ENCODE measurements at regions of chr19 and their contacts with region 1.

Region 1: DNA sequence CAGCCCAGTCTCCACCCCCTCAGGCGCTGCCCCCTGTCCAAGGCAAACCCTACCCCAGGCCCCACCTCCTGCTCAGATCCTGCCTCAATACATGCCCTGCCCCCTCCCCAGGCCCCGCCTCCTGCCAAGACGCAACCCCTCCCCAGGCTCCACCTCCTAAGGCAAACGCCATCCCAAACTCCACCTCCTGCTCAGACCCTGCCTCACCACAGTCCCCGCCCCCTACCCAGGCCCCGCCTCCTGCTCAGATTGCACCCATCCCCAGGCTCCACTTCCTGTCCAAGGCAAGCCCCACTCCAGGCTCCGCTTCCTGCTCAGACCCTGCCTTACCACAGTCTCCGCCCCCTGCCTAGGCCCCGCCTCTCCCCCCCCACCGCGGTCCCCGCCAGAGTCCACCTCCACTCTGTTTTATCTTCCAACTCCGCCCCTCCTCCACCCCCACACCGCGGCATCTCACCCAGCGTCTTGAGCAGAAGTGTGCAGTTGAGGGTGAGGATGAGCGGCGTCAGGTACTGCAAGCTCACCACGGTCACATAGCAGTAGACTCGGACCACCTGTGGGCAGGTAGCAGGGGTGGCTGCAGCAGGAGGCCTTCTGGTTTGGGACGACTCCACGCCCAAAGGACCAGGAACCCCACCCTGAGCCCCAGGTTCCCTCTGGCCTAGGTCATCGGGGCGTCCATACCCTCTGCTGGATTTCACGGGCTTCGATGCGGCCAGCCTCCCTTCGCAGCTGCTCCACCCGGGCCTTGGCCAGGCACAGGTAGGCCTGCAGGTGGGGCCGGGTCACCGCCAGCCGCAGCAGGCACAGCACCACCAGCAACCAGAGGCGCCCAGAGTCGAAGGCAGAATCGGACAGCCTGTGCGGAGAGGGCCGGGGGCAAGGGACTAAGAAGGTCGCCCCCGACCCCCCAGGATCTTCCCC is 17.7 kb downstream of the TMEM161A start:
- DNase-seq: peak in 1 of 2 experiments; percentile 50
- H3K4me3 ChIP-seq: no peak overlapping the region
- H3K27ac ChIP-seq: no peak overlapping the region
- H3K4me1 ChIP-seq: no peaks in the 10 kb centered on the region
- H3K27me3 ChIP-seq: no peaks in the 10 kb centered on the region
- CTCF ChIP-seq: no peak

Region 2: DNA sequence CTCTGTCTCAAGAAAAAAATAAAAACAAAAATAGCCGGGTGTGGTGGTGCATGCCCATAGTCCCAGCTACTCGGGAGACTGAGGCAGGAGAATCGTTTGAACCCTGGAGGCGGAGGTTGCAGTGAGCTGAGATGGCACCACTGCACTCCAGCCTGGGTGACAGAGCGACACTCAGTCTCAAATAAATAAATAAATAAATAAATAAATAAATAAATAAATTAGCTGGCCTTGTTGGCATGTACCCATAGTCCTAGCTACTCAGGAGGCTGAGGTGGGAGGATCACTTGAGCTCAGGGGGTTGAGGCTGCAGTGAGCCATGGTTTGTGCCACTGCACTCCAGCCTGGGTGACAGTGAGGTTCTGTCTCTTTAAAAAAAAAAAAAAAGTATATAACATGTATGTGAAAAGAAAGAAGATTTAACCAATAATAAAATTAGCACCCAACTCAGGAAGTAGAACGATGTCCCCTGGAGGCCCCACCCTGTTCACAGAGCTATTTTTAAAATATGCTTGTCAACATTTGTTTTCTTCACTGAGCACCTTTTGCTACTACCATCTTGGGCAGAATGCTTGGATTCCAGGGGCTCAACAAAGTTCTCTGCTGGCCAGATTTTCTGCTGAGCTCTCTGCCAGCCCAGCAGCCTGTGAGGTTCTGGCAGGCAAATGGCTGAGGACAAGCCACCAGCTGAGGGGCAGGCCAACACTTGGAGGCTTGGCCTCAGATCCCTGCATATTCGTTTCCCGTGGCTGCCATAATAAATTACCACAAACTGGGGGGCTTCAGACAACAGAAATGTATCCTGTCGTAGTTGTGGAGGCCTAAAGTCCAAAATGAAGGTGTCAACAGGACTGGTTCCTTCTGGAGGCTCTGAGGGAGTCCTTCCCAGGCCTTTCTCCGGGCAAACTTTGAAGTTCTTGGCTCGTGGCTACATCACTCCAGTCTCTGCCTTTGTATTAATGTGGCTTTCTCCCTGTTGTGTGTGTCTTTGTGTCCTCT is 51.6 kb before region 1 on chr19:
- CTCF ChIA-PET with region 1: no interaction called
- POLR2A ChIA-PET with region 1: interaction called, 14 read pairs
- intact Hi-C with region 1: no loop called
- DNase-seq: no peak
- H3K4me3 ChIP-seq: no peak overlapping the region
- H3K27ac ChIP-seq: no peak overlapping the region
- H3K4me1 ChIP-seq: peaks cover 13% of the 10 kb centered on the region
- H3K27me3 ChIP-seq: no peaks in the 10 kb centered on the region
- CTCF ChIP-seq: no peak

Region 3: DNA sequence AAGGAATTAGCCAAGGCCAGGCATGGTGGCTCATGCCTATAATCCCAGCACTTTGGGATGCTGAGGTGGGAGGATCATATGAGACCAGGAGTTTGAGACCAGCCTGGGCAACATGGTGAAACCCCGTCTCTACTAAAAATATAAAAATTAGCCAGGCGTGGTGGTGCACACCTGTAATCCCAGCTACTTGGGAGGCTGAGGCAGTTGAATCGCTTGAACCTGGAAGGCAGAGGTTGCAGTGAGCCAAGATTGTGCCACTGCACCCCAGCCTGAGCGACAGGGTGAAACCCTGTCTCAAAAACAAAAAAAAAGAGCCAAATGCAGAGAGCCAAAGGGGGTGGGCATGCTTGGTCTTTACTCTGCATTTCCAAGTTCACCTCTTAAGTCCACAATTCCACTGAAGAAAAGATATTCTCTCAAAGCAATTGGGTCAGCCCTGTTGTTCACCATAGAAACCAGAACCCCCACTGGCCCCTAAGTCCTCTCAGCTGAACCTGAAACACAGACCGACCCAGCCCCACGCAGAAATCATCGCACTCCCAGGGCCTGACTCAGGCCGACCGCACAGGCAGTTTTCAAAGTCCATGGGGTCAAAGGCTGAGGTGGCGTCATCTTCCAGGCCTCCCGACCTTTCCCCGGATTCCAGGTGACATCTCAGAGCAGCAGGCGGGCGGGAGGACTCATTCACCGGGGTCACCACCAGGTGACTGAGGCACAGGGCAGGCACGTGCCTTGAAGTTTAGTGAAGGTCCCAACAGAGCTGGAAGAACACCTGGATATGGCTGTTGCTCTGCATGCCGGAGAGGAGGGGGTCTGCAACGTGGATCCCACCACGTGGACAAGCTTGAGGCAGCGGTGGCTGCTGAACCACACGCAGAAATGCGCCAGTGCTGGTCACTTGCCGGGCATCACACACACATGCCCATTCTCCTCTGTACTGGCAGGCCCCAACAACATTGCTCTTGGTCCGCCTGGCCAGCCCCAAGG is 23.6 kb before region 1 on chr19:
- CTCF ChIA-PET with region 1: interaction called, 13 read pairs
- POLR2A ChIA-PET with region 1: no interaction called
- intact Hi-C with region 1: no loop called
- DNase-seq: peak; percentile 77 to 95
- H3K4me3 ChIP-seq: no peak overlapping the region
- H3K27ac ChIP-seq: peak overlapping the region; percentile 79
- H3K4me1 ChIP-seq: peaks cover 52% of the 10 kb centered on the region
- H3K27me3 ChIP-seq: no peaks in the 10 kb centered on the region
- CTCF ChIP-seq: no peak

Measured in PC-9 (cell line).